Calu3 (cell line): ENCODE measurements at regions of chr20 and their contacts with region 1.

Region 1: DNA sequence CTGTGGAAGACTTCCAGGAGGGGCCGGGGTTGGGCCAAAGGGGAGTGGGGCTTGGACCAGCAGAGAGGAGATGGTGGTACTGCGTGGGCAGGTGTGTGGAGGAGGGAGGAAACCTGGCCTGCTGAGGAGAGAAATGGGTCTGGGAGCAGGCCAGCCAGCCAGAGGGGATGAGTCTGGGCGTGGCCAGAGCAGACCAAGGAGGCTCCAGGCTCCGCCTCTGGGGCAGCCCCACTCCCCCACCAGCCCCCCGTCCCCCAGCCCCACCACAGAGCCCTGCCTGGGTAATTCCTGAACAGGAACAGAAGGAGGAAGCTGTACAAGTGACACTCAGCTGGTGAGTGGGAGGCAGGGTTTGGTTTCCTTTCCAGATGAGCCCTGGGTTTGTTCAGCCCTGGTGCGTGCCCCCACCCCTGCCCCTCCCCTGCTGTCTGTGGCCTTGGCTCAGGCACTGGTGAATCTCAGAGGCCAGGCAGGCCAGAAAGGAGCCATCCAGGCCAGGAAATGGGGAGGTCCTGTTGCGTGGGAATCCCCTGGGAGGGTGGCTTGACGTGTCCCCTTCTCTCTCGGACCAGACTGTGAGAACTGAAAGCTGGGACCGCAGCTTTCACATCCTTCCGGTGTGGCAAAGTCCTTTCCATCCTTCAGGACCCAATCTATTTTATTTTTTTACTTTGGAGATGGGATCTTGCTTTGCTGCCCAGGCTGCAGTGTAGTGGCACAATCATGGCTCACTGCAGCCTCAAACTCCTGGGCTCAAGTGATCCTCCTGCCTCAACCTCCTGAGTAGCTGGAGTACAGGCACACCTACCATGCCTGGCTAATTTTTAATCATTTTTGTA is 9.4 kb upstream of the SRC start:
- DNase-seq: no peak
- H3K4me3 Mint-ChIP-seq: no peak overlapping the region
- H3K27ac Mint-ChIP-seq: no peak overlapping the region
- H3K4me1 Mint-ChIP-seq: peaks cover 47% of the 10 kb centered on the region
- H3K27me3 Mint-ChIP-seq: no peaks in the 10 kb centered on the region
- CTCF ChIP-seq: no peak

Region 2: DNA sequence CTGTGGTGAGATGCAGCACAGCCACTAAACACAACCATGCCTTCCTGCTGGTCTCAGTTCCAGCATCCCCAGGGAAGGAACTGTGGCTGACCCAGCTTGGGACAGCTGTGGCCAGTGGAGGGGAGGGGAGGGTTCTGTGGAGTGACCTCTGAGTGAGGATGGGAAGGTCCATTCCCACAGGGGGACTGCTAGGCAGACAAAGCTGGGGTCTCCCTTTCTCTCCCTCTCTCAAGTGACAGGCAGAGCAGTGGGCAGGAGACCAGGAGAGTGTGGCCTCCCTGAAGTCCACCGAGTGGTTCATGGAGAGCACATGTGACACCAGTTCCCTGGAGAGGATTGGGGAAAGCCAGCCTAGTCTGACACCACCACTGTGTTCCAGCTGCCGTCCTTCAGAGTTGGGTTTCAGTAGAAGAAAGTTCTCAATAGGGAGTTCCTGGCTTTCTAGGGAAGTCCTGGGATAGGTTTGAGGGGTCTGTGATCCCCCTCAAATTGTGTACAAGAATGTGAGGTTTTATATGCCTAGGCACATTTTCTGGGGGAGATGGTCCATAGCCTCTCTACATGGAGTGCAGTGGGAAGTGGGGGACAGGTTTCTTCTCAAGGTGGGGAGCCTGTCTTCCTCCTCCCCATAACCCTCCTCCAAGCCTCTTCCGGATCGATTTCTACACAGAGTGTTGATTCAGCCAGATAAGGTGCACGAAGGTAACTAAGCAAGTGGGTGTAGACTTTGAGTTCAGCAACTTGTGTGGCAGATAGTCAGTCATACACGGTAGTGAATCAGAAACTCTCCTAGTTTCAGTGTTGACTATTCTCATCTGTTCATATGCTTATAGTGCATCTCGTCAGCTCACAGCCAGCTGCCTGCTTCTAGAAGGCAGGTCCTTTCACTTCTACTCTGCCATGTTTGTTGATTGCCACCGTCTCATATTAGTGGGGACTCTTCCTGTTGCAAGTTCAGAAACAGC is 28.2 kb before region 1 on chr20:
- CTCF ChIA-PET with region 1: interaction called, 4 read pairs
- intact Hi-C with region 1: loop called (anchors 1 kb)
- DNase-seq: peak; percentile 63
- H3K4me3 Mint-ChIP-seq: peak overlapping the region; percentile 18
- H3K27ac Mint-ChIP-seq: peak overlapping the region; percentile 67
- H3K4me1 Mint-ChIP-seq: peaks cover 37% of the 10 kb centered on the region
- H3K27me3 Mint-ChIP-seq: no peaks in the 10 kb centered on the region
- CTCF ChIP-seq: no peak

Region 3: DNA sequence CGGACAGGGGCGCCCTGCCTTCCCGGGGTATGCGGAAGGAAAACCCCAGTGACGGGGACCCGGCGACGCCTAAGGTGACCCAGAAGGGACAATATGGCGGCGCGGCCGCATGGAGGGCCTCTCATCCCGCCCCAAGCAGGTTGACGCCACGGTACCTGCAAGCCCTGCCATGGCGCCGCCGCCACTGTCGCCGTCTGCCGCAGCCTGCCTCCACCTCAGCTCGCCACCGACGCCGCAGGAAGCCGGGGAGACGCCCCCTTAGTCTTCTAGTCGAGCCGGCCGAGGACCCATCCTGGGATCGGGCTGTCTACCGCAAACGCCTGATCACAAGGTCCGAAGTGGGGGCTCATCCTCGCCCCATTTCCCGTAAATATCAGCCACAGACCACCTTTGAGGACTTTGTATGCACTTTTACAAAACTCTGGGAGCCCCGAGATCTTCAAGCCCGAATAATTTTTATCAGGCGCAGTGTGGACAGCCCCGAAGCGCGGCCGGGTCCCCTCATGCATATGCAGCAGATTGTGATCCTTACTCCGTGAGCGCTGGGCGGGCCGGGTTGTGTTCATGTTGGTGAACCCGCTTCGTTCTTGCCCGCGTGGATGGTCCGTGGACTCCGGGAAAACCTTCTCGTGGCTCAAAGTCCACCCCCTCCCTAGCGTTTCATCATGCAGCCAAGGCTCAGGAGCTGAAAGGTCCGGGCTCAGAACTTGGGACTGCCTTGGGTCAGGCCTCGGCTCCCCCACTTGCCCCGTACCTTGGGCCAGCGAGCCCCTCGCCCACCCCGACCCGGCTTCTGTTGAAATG is 191.3 kb after region 1 on chr20 and contains the start of gene BLCAP:
- CTCF ChIA-PET with region 1: no interaction called
- intact Hi-C with region 1: loop called (anchors 5 kb)
- DNase-seq: peak; percentile 92
- H3K4me3 Mint-ChIP-seq: peak within 1 kb of the TSS; percentile 91
- H3K27ac Mint-ChIP-seq: peak within 1 kb of the TSS; percentile 100
- H3K4me1 Mint-ChIP-seq: peaks cover 40% of the 10 kb centered on the region
- H3K27me3 Mint-ChIP-seq: peaks cover 48% of the 10 kb centered on the region
- CTCF ChIP-seq: no peak
- total RNA-seq, gene BLCAP: 90.4 and 114 TPM in 2 replicates

Region 4: DNA sequence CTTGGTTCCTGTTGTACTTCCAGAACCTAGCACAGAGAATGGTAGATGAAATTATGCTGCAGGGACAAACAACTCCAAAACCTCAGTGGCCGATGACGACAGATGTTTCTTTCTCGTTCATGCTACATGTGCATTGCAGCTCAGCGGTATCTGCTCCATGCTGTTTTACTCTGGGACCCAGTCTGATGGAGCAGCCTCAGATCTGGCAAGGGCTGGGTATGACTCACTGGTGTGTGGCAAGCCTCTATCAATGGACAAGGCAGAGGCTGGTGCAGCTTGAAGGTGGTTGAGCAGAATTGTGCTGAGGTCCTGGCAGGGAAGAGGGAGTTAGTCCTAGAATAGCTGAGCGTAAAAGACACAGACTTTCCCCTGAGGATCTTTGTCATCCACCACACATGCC is 201.4 kb after region 1 on chr20:
- CTCF ChIA-PET with region 1: no interaction called
- intact Hi-C with region 1: no loop called
- DNase-seq: peak; percentile 62
- H3K4me3 Mint-ChIP-seq: no peak overlapping the region
- H3K27ac Mint-ChIP-seq: no peak overlapping the region
- H3K4me1 Mint-ChIP-seq: peaks cover 46% of the 10 kb centered on the region
- H3K27me3 Mint-ChIP-seq: peaks cover 10% of the 10 kb centered on the region
- CTCF ChIP-seq: no peak

Region 5: GRCh38 chr20:37602634-37603033 is 266.0 kb after region 1 on chr20:
- CTCF ChIA-PET with region 1: no interaction called
- intact Hi-C with region 1: no loop called
- DNase-seq: no peak
- H3K4me3 Mint-ChIP-seq: no peak overlapping the region
- H3K27ac Mint-ChIP-seq: no peak overlapping the region
- H3K4me1 Mint-ChIP-seq: no peaks in the 10 kb centered on the region
- H3K27me3 Mint-ChIP-seq: peaks cover 89% of the 10 kb centered on the region
- CTCF ChIP-seq: no peak